ENCODE measurements at regions of chr7 and their contacts with region 1.

Region 1: GRCh38 chr7:44858161-44858560 is 10.3 kb upstream of the H2AZ2 start:
- DNase-seq: no peak
- ATAC-seq: no peak
- H3K4me3 Mint-ChIP-seq: no peak overlapping the region
- H3K27ac Mint-ChIP-seq: no peak overlapping the region
- H3K4me1 Mint-ChIP-seq: peaks cover 18% of the 10 kb centered on the region
- H3K27me3 Mint-ChIP-seq: no peaks in the 10 kb centered on the region

Region 2: DNA sequence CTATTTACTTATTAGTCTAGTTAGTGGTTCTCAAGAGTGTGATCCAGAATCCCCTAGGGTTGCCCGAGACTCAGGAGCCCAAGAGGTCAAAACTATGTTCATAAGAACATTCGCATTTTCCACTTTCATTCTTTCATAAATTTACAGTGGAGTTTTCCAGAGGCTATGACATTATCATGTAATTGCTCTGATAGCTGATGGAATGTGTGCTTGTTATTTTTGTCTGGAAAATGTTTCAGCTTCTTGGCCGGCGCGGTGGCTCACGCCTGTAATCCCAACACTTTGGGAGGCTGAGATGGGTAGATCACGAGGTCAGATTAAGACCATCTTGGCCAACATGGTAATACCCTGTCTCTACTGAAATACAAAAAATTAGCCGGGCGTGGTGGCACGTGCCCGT is 17.1 kb after region 1 on chr7:
- CTCF ChIA-PET with region 1: interaction called, 10 read pairs
- POLR2A ChIA-PET with region 1: no interaction called
- intact Hi-C with region 1: no loop called
- DNase-seq: no peak
- ATAC-seq: no peak
- H3K4me3 Mint-ChIP-seq: no peak overlapping the region
- H3K27ac Mint-ChIP-seq: no peak overlapping the region
- H3K4me1 Mint-ChIP-seq: peaks cover 22% of the 10 kb centered on the region
- H3K27me3 Mint-ChIP-seq: no peaks in the 10 kb centered on the region

Region 3: GRCh38 chr7:44914992-44915607 is 56.9 kb after region 1 on chr7:
- CTCF ChIA-PET with region 1: interaction called, 32 read pairs
- POLR2A ChIA-PET with region 1: interaction called, 3 read pairs
- intact Hi-C with region 1: loop called (anchors 1 to 2 kb)
- DNase-seq: peak; percentile 87
- ATAC-seq: peak; percentile 99
- H3K4me3 Mint-ChIP-seq: peak overlapping the region; percentile 3
- H3K27ac Mint-ChIP-seq: peak overlapping the region; percentile 73
- H3K4me1 Mint-ChIP-seq: peaks cover 23% of the 10 kb centered on the region
- H3K27me3 Mint-ChIP-seq: no peaks in the 10 kb centered on the region

Region 4: GRCh38 chr7:44921607-44922359 is 63.6 kb after region 1 on chr7:
- CTCF ChIA-PET with region 1: interaction called, 32 read pairs
- POLR2A ChIA-PET with region 1: interaction called, 3 read pairs
- intact Hi-C with region 1: loop called (anchors 1 kb)
- DNase-seq: peak; percentile 99
- ATAC-seq: peak; percentile 99
- H3K4me3 Mint-ChIP-seq: no peak overlapping the region
- H3K27ac Mint-ChIP-seq: peak overlapping the region; percentile 47
- H3K4me1 Mint-ChIP-seq: peaks cover 15% of the 10 kb centered on the region
- H3K27me3 Mint-ChIP-seq: peaks cover under 1% of the 10 kb centered on the region

Region 5: DNA sequence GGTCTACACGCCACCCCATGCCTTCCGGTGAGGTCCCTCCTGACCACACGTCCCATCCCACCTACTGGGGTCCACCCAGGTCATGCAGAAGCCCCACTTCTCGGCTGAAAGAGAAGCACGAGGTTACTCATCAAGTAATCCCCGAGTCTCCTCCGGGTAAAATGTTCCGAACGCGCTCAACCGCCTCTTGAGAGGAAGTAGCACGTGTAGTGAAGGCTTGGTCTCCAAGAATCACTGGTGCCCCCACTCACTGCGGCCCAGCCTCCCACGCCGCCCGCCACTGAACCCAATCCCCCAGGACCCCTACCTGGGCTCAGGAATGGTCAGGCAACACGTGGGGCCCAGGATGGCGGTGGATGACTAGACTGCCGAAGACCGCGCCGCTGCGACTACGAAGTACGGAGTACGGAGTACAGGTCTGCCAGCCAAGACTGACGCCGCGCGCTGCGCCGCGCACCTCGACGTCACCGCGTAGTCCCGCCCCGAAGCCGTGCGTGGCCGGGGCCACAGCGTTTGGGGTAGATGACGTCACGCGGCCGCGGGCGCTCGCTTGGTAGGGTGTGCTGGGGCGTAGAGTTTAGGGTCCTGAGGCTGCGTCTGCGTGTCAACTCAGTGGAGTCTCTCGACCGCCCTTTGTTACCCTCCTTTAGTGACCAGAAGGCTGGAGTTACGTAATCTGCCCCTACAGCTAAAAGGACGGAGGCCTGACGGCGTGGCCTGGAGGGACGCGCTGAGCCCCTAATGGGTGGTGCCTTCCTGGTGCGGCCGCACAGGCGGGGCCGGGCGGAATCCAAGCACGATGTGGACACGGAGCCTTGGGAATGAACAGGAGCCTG is 128.3 kb after region 1 on chr7:
- CTCF ChIA-PET with region 1: no interaction called
- POLR2A ChIA-PET with region 1: no interaction called
- intact Hi-C with region 1: loop called in 1 of 2 experiments (anchors 1 kb)
- DNase-seq: peak; percentile 99
- ATAC-seq: peak; percentile 90
- H3K4me3 Mint-ChIP-seq: peak overlapping the region; percentile 99
- H3K27ac Mint-ChIP-seq: peak overlapping the region; percentile 99
- H3K4me1 Mint-ChIP-seq: peaks cover 52% of the 10 kb centered on the region
- H3K27me3 Mint-ChIP-seq: no peaks in the 10 kb centered on the region

Measured in activated CD4-positive, alpha-beta T cell treated with anti-CD3 and anti-CD28 coated beads for 36 hours (primary cell).